Cardiac septum (tissue), 1 donor: ENCODE measurements at regions of chr19 and their contacts with region 1.

Region 1: GRCh38 chr19:14786421-14786851 is 8.1 kb upstream of the ADGRE2 start:
- DNase-seq: no peak

Region 2: GRCh38 chr19:14889994-14890642 is 103.7 kb after region 1 on chr19:
- intact Hi-C with region 1: loop called (anchors 5 kb)
- DNase-seq: no peak